ENCODE measurements at regions of chr12 and their contacts with region 1.

Region 1: DNA sequence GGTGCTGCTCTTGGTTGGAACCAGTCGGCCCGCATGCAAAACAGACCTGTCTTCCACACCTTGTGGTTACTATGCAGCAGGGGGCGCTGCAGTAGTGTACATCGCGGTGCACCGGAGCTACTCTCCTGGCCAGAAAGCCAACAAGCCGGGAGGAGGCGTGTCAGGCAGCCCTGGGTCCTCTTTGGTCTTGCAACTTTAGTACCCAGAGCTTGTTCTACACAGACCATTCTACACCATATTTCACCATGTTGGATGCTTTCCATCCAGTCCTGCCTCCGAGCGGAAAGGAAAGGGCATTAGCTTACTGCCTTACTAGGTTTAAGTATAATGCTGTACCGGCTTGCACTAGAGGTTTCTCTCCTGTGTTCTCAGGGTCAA is 927 bp upstream of the TMTC2 start:
- DNase-seq: peak; percentile 69
- H3K4me3 ChIP-seq: peak overlapping the region; percentile 77 to 92 (median 84)
- H3K27ac ChIP-seq: peak overlapping the region; percentile 94 to 97 (median 96)
- H3K4me1 ChIP-seq: peaks cover 0 to 51% (median 9%) of the 10 kb centered on the region in 3 donors
- H3K27me3 ChIP-seq: no peaks in the 10 kb centered on the region
- CTCF ChIP-seq: peak; percentile 68 to 96 (median 92)
- POLR2A ChIP-seq: no peak

Region 2: GRCh38 chr12:83462419-83462818 is 776.6 kb after region 1 on chr12:
- intact Hi-C with region 1: no loop called
- DNase-seq: no peak
- H3K4me3 ChIP-seq: no peak overlapping the region
- H3K27ac ChIP-seq: no peak overlapping the region
- H3K4me1 ChIP-seq: no peaks in the 10 kb centered on the region
- H3K27me3 ChIP-seq: no peaks in the 10 kb centered on the region
- CTCF ChIP-seq: no peak
- POLR2A ChIP-seq: no peak

Region 3: GRCh38 chr12:84502907-84503787 is 1817.4 kb after region 1 on chr12:
- intact Hi-C with region 1: loop called (anchors 5 kb)
- DNase-seq: no peak
- H3K4me3 ChIP-seq: no peak overlapping the region
- H3K27ac ChIP-seq: no peak overlapping the region
- H3K4me1 ChIP-seq: peaks cover 4 to 24% (median 13%) of the 10 kb centered on the region in 3 donors
- H3K27me3 ChIP-seq: no peaks in the 10 kb centered on the region
- CTCF ChIP-seq: peak; percentile 19 to 79 (median 55)
- POLR2A ChIP-seq: no peak